Mammary epithelial cell (primary cell): ENCODE measurements at regions of chr3 and their contacts with region 1.

Region 1: GRCh38 chr3:49839193-49839809 is 17.1 kb downstream of the TRAIP start:
- DNase-seq: peak; percentile 52
- H3K4me3 ChIP-seq: no peak overlapping the region
- H3K27ac ChIP-seq: no peak overlapping the region
- H3K4me1 ChIP-seq: no peaks in the 10 kb centered on the region
- H3K27me3 ChIP-seq: no peaks in the 10 kb centered on the region
- CTCF ChIP-seq: peak; percentile 93 to 98

Region 2: GRCh38 chr3:49703443-49703927 is 135.8 kb before region 1 on chr3:
- CTCF ChIA-PET with region 1: no interaction called
- dilution Hi-C with region 1: no loop called
- in situ Hi-C with region 1: loop called (anchors 5 to 10 kb)
- intact Hi-C with region 1: loop called (anchors 1 kb)
- DNase-seq: peak; percentile 49
- H3K4me3 ChIP-seq: no peak overlapping the region
- H3K27ac ChIP-seq: no peak overlapping the region
- H3K4me1 ChIP-seq: peaks cover 3% of the 10 kb centered on the region
- H3K27me3 ChIP-seq: no peaks in the 10 kb centered on the region
- CTCF ChIP-seq: peak; percentile 93 to 94

Region 3: GRCh38 chr3:49790626-49791411 is 48.5 kb before region 1 on chr3:
- CTCF ChIA-PET with region 1: no interaction called
- dilution Hi-C with region 1: loop called (anchors 5 kb)
- in situ Hi-C with region 1: no loop called
- intact Hi-C with region 1: no loop called
- DNase-seq: no peak
- H3K4me3 ChIP-seq: no peak overlapping the region
- H3K27ac ChIP-seq: no peak overlapping the region
- H3K4me1 ChIP-seq: peaks cover 10% of the 10 kb centered on the region
- H3K27me3 ChIP-seq: no peaks in the 10 kb centered on the region
- CTCF ChIP-seq: no peak

Region 4: GRCh38 chr3:49826016-49826415 is 13.3 kb before region 1 on chr3:
- CTCF ChIA-PET with region 1: interaction called, 10 read pairs
- dilution Hi-C with region 1: no loop called
- in situ Hi-C with region 1: no loop called
- intact Hi-C with region 1: no loop called
- DNase-seq: no peak
- H3K4me3 ChIP-seq: no peak overlapping the region
- H3K27ac ChIP-seq: no peak overlapping the region
- H3K4me1 ChIP-seq: no peaks in the 10 kb centered on the region
- H3K27me3 ChIP-seq: no peaks in the 10 kb centered on the region
- CTCF ChIP-seq: no peak

Region 5: DNA sequence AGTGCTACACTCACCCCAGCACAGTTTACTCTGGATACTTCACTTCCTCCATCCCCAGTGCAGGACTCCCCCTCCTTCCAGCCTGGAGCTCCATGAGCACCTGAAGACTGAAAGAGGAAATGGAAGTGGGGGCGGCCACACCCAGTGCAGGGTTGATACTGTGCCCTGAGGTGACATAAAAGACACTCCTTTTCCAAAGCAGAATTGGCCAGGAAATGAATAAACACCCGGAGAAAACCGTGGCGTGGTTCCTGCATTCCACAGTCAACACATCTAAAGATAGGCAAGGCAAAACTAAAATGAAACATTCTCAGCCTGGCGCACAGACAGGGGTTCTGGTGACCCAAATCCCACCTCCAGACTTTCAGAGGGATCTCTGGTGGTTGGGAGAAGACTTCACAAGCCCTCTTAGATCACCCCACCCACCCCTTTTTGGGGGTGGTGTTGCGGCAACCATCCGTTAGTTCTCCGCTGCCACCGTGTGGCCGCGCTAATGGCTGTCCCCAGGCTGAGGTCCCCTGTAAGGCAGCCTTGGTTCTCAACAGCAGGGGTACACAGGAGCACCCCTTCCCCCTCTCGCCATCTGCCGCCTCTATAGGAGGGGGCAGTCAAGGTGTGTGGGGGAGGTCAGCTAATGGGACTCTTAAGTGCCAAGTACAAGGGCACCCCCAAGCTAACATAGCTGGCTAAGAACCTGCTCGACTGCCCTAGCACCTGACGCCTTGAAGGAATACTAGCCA is 66.9 kb after region 1 on chr3:
- CTCF ChIA-PET with region 1: interaction called, 18 read pairs
- dilution Hi-C with region 1: no loop called
- in situ Hi-C with region 1: no loop called
- intact Hi-C with region 1: loop called (anchors 1 kb)
- DNase-seq: peak; percentile 60
- H3K4me3 ChIP-seq: peak overlapping the region; percentile 17 to 34 (median 25)
- H3K27ac ChIP-seq: peak overlapping the region; percentile 31
- H3K4me1 ChIP-seq: peaks cover 48% of the 10 kb centered on the region
- H3K27me3 ChIP-seq: no peaks in the 10 kb centered on the region
- CTCF ChIP-seq: peak; percentile 59 to 83